Head of caudate nucleus (tissue), 42 donors: ENCODE measurements at regions of chr10 and their contacts with region 1.

Region 1: DNA sequence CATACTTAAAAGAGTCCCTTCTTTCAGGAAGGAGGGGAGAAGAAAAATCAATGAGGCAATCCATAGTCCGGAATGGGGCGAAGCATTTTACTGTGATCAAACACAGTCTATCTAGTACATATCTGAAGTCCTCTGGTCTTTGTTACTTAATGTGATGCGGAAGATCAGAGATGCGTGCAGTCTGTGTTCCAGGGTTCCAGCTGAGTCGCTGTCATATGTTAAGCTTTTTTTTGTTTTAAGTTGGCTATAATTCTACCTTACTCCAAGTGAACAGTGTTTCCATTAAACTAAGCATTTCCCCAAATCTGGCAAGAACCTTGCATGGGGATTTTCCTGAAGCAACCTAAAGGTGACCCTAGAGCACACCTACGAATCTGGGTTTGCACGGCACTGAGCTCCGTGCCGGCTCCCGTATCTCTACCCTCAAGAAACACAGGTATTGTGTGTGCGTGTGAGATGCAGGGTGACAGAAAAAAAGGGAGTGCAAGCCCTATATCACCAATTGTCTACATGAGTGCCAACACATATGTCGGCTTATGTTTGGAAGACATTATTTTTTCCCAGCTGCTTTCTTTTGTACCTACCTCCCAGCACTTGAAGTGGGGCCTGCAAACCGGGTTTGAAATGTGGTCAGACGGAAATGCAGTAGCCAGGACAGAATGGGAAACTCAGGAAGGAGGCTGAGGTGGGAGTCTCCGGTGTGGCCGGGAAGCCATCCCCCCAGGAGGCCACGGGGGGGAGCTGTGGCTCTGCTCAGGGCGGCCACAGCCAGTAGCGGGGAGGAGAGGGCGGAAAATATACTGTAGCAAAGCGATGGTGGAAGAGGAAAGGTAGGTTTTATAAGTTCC is 435.8 kb upstream of the MGMT start:
- DNase-seq: peak in 40 of 42 donors; percentile 28 to 75 (median 53)

Region 2: GRCh38 chr10:129140921-129141885 is 110.0 kb after region 1 on chr10:
- intact Hi-C with region 1: no loop called
- DNase-seq: peak in 18 of 42 donors; percentile 6 to 46 (median 18)

Region 3: DNA sequence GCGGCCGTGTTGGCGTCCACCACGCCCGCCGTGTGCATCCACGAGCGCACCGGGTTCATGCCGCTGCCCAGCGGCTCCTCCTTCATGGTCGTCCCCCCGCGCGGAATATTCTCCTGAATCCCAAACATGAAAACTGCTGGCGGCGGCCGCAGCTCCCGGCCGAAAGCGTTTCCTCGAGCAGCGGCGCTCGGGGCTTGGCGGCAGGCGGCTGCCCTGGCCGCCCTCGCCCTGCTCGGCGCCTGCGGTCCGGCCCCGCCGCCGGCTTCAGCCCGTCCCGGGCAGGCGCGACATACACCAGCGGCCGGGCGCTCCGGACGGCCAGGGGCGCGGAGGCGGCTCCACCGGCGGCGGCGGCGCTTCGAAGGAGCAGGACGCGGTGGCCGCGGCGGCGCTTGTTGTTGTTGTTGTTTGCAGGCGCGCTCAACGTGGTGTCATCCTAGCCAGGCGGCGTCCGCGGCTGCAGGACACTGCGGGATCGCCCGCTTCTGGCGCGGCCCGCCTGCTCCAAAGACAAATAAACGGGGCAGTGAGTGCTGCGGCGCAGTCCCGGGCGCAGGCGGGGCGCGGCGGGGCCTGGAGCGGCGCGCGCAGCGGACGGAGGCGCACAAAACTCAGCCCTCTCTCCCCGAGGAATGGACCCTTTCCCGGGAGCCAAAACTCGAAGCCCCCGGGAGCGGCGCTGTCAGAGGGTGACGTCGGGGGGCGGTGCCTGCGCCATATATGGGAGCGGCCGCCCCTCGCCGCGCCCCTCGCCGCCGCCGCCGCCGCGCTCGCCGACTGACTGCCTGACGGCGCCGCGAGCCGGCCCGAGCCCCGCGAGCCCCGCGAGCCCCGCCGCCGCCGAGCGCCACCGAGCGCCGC is 932.7 kb after region 1 on chr10 and contains the start of gene EBF3:
- intact Hi-C with region 1: loop called (anchors 10 kb)
- DNase-seq: peak in 5 of 42 donors; percentile 1 to 43 (median 33)